Dorsolateral prefrontal cortex (tissue), 120 donors: ENCODE measurements at regions of chr6 and their contacts with region 1.

Region 1: DNA sequence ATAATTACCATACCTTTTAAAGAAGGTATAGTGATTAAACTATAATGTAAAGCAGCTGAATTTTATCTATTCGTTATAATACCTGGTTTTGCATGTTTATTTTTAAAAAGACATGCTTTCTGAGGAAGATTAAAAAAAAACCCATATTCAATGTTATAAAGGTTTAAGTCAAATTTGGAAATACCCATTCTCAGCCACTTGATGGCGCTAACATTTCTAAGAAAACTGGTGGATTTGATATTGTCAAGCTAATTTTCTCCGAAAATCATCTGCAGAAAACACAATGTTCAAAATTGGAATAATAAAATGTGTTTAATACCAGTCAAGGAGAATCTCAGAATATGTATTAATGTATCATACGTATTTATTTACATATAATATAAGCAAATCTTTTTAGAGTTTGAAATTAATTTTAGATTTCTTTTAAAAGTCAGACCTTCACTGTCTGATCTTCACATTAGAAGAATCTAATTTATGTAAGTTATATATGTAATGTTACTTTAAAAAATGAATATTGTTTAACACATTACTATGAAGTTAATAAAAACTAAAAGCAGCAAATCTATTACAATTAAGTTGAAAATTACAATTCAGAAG is 35.0 kb downstream of the SHPRH start:
- DNase-seq: no peak
- H3K4me3 ChIP-seq: no peak overlapping the region
- H3K27ac ChIP-seq: no peak overlapping the region
- H3K27me3 ChIP-seq: no peaks in the 10 kb centered on the region
- CTCF ChIP-seq: peak; percentile 61 to 89 (median 75)

Region 2: GRCh38 chr6:146532702-146533101 is 603.6 kb after region 1 on chr6:
- intact Hi-C with region 1: loop called in 1 of 2 experiments (anchors 10 kb)
- DNase-seq: no peak
- H3K4me3 ChIP-seq: no peak overlapping the region
- H3K27ac ChIP-seq: no peak overlapping the region
- H3K27me3 ChIP-seq: peaks cover 0 to 3% (median 0%) of the 10 kb centered on the region in 45 donors
- CTCF ChIP-seq: no peak

Region 3: DNA sequence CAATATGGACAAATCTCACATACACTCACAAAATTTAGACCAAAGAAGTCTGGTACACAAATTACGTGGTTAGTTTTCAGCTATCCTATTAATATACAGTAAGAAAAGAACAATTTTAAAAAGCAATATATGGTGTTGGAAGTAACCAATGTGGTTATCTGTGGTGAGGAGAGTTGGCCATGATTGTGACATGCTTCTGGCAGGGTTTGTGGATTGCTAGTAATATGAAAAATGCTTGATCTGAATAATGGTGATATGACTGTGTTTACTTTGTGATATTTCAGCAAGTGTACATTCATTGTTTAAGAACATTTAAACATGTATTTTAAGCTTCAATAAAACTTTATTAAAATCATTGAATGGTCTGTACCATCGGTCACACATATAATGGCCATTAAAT is 768.8 kb after region 1 on chr6:
- intact Hi-C with region 1: loop called in 1 of 2 experiments (anchors 10 kb)
- DNase-seq: no peak
- H3K4me3 ChIP-seq: no peak overlapping the region
- H3K27ac ChIP-seq: no peak overlapping the region
- H3K27me3 ChIP-seq: no peaks in the 10 kb centered on the region
- CTCF ChIP-seq: no peak